ENCODE measurements at regions of chr7 and their contacts with region 1.

Region 1: DNA sequence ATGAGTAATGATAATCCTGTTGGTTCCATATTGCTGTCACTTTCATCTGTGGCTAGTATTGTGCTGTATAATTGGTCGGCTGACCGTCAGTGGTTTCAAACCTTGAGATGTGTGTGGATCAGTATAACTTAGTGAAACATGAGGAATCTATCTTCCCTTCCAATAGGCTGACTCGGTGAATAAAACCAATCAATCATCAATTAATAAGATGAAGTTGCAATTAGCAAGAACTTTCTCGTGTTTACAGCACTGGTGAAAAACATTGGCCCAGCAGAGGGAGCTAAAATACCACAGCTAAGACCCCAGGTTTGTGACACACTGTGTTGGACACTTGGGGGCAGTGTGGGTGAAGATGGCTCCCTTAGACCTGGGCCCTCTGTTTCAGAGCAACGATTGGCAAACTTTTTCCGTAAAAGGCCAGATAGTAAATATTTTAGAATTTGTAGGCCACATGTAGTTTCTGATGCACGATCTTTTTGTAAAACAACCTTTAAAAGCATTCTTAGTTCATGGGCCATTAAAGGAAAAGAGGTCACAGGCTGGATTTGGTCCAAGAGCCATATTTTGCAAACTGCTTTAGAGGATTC is 47.8 kb downstream of the STRA8 start:
- DNase-seq: peak; percentile 78
- ATAC-seq: peak; percentile 97
- H3K4me3 ChIP-seq: no peak overlapping the region
- H3K27ac ChIP-seq: no peak overlapping the region
- H3K4me1 ChIP-seq: 0 out of 2 replicates have a peak, but pooled peaks cover 11% of the 10 kb centered on the region
- H3K27me3 ChIP-seq: no peaks in the 10 kb centered on the region
- CTCF ChIP-seq: peak; percentile 99
- EP300 ChIP-seq: no peak
- POLR2A ChIP-seq: no peak
- RAD21 ChIP-seq: peak; percentile 96

Region 2: GRCh38 chr7:135102372-135102771 is 179.1 kb before region 1 on chr7:
- CTCF ChIA-PET with region 1: no interaction called
- POLR2A ChIA-PET with region 1: no interaction called
- in situ Hi-C with region 1: no loop called
- intact Hi-C with region 1: no loop called
- DNase-seq: no peak
- ATAC-seq: no peak
- H3K4me3 ChIP-seq: no peak overlapping the region
- H3K27ac ChIP-seq: no peak overlapping the region
- H3K4me1 ChIP-seq: peaks cover 7% of the 10 kb centered on the region; the same call in 1 of the 2 replicates
- H3K27me3 ChIP-seq: no peaks in the 10 kb centered on the region
- CTCF ChIP-seq: no peak
- EP300 ChIP-seq: no peak
- POLR2A ChIP-seq: no peak
- RAD21 ChIP-seq: no peak

Region 3: GRCh38 chr7:135335628-135336139 is 54.2 kb after region 1 on chr7:
- CTCF ChIA-PET with region 1: interaction called, 81 read pairs
- POLR2A ChIA-PET with region 1: no interaction called
- in situ Hi-C with region 1: loop called (anchors 5 kb)
- intact Hi-C with region 1: loop called (anchors 1 kb)
- DNase-seq: peak; percentile 80
- ATAC-seq: peak; percentile 98
- H3K4me3 ChIP-seq: no peak overlapping the region
- H3K27ac ChIP-seq: no peak overlapping the region
- H3K4me1 ChIP-seq: 0 out of 2 replicates have a peak, but pooled peaks cover under 1% of the 10 kb centered on the region
- H3K27me3 ChIP-seq: no peaks in the 10 kb centered on the region
- CTCF ChIP-seq: peak; percentile 95
- EP300 ChIP-seq: no peak
- POLR2A ChIP-seq: no peak
- RAD21 ChIP-seq: peak; percentile 93

Region 4: DNA sequence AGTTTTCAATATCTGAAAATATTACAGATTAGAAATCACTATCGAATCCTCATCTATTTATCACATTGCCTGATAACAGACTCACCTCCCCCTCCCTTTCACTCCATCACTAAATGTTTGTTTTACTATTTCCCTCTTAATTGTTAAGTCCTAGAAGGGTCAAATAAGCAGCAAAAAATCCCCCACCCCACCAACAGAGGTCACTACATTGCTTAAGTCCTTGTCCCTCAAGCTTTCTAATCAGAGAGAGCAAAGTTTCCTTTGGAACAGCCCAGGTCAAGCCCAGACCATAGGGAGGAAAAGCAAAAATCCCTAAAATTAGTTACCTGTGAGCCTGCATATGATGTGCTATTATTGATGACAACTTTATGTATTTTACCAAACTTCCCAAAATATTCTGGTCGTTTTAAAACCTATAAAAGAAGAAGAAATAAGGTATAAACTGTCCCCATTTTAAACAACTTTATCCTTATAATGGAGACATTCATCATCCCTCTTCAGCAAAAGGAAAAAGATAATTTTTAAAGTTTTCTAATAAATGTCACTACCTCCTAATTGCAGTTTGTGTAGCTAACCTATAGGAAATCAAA is 133.5 kb after region 1 on chr7:
- CTCF ChIA-PET with region 1: interaction called, 5 read pairs
- POLR2A ChIA-PET with region 1: no interaction called
- in situ Hi-C with region 1: no loop called
- intact Hi-C with region 1: loop called (anchors 1 kb)
- DNase-seq: peak; percentile 74
- ATAC-seq: peak; percentile 85
- H3K4me3 ChIP-seq: no peak overlapping the region
- H3K27ac ChIP-seq: no peak overlapping the region
- H3K4me1 ChIP-seq: peaks cover 18% of the 10 kb centered on the region
- H3K27me3 ChIP-seq: no peaks in the 10 kb centered on the region
- CTCF ChIP-seq: peak; percentile 68
- EP300 ChIP-seq: no peak
- POLR2A ChIP-seq: no peak
- RAD21 ChIP-seq: no peak

Region 5: GRCh38 chr7:135558337-135558767 is 276.9 kb after region 1 on chr7:
- CTCF ChIA-PET with region 1: interaction called, 20 read pairs
- POLR2A ChIA-PET with region 1: no interaction called
- in situ Hi-C with region 1: loop called (anchors 25 kb)
- intact Hi-C with region 1: no loop called
- DNase-seq: peak; percentile 71
- ATAC-seq: peak; percentile 72
- H3K4me3 ChIP-seq: peak overlapping the region; percentile 72 to 86 (median 75)
- H3K27ac ChIP-seq: peak overlapping the region; percentile 93
- H3K4me1 ChIP-seq: peaks cover 30% of the 10 kb centered on the region
- H3K27me3 ChIP-seq: no peaks in the 10 kb centered on the region; a peak in 1 of 5 replicates
- CTCF ChIP-seq: peak; percentile 72
- EP300 ChIP-seq: no peak
- POLR2A ChIP-seq: no peak
- RAD21 ChIP-seq: no peak

Region 6: DNA sequence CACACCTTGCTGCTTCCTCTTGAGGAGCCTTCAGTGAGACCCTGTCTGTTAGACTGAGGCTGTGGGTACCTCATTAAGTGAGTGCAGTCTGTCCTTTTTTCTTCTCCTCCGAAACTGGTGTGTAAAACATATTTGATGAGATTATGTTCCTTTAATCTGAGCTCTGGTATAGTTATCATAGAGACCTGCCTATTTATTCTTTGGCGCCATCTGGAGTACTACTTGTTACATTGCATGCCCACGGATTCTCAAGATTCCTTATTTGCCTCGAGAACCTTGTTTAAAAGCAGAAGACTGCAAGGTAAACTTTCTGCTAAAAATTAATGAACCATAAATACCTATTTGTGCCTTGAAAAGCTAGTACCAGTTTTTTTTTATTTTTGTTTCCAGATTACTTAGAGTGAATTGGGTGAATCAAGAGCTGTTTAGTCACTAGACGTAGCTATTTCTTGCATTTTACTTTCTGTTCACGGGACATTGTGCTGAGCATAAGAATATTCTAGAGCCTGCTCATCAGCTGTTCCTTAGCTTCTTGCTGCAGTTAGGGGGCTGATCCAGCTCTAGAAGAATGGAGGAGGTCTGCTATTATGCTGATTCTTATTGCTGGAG is 363.9 kb after region 1 on chr7:
- CTCF ChIA-PET with region 1: interaction called, 14 read pairs
- POLR2A ChIA-PET with region 1: no interaction called
- in situ Hi-C with region 1: loop called (anchors 10 kb)
- intact Hi-C with region 1: loop called (anchors 1 kb)
- DNase-seq: peak; percentile 31
- ATAC-seq: peak; percentile 72
- H3K4me3 ChIP-seq: no peak overlapping the region
- H3K27ac ChIP-seq: no peak overlapping the region
- H3K4me1 ChIP-seq: no peaks in the 10 kb centered on the region
- H3K27me3 ChIP-seq: no peaks in the 10 kb centered on the region
- CTCF ChIP-seq: peak; percentile 60
- EP300 ChIP-seq: no peak
- POLR2A ChIP-seq: no peak
- RAD21 ChIP-seq: no peak